Naive thymus-derived CD4-positive, alpha-beta T cell (primary cell): ENCODE measurements at regions of chr19 and their contacts with region 1.

Region 1: DNA sequence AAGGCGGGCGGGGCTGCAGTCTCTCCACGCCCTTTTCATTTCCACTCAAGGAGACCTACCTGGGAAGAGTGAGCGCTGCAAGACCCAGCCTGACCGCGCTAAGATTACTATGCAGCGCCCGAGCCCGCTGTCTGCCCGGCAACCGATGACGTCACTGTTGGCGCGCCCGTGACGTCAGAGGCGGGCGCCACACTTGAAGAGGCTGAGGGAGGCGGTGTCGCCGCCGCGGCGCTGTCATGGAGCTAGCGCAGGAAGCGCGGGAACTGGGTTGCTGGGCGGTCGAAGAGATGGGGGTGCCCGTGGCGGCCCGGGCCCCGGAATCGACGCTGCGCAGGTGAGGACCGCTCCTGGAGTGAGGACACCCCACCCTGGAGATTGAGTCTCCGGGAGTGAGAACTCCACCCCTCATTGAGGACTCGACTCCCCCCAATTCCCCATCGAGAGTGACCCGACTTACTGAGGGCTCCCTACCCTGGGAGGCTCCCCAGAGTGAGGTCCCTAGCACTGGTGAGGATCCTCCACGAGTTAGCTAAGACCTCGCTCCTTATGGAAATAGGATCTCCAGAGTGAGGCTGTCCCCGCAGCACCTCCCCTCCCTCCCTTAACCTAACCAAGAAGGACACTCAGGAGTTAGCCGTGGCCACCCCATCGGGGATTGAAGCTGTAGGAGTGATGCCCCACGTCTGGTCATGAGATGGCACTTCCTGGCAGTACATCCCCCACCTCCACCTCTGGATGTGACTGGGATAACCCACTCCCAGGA is at the start of gene HAUS5:
- DNase-seq: peak; percentile 92 to 99 (median 95)
- ATAC-seq: peak; percentile 92
- H3K4me3 ChIP-seq: peak within 1 kb of the TSS; percentile 98
- H3K4me3 Mint-ChIP-seq: peak within 1 kb of the TSS; percentile 86 to 94 (median 89)
- H3K27ac ChIP-seq: peak within 1 kb of the TSS; percentile 86
- H3K27ac Mint-ChIP-seq: peak within 1 kb of the TSS; percentile 88 to 98 (median 94)
- H3K4me1 ChIP-seq: peaks cover 24 to 28% of the 10 kb centered on the region in 2 donors
- H3K4me1 Mint-ChIP-seq: peaks cover 4 to 50% (median 43%) of the 10 kb centered on the region in 7 donors
- H3K27me3 ChIP-seq: no peaks in the 10 kb centered on the region
- H3K27me3 Mint-ChIP-seq: peaks cover 0 to 2% (median 0%) of the 10 kb centered on the region in 5 donors
- total RNA-seq, gene HAUS5: 23.6 to 40.0 (median 28.4) TPM

Region 2: GRCh38 chr19:35436477-35437405 is 176.0 kb before region 1 on chr19:
- CTCF ChIA-PET with region 1: no interaction called
- POLR2A ChIA-PET with region 1: no interaction called
- intact Hi-C with region 1: no loop called
- DNase-seq: peak in 1 of 9 donors; percentile 28
- ATAC-seq: peak; percentile 80
- H3K4me3 ChIP-seq: no peak overlapping the region
- H3K4me3 Mint-ChIP-seq: peak overlapping the region in 1 of 10 donors; percentile 40
- H3K27ac ChIP-seq: no peak overlapping the region
- H3K27ac Mint-ChIP-seq: peak overlapping the region in 1 of 9 donors; percentile 48
- H3K4me1 ChIP-seq: peaks cover 7 to 9% of the 10 kb centered on the region in 2 donors
- H3K4me1 Mint-ChIP-seq: peaks cover 6 to 21% (median 11%) of the 10 kb centered on the region in 7 donors
- H3K27me3 ChIP-seq: no peaks in the 10 kb centered on the region
- H3K27me3 Mint-ChIP-seq: peaks cover 10 to 36% (median 22%) of the 10 kb centered on the region in 5 donors

Region 3: GRCh38 chr19:35545001-35545911 is 67.5 kb before region 1 on chr19 and contains the start of gene TMEM147:
- CTCF ChIA-PET with region 1: no interaction called
- POLR2A ChIA-PET with region 1: no interaction called
- intact Hi-C with region 1: loop called (anchors 1 kb)
- DNase-seq: peak; percentile 60 to 90 (median 69)
- ATAC-seq: peak; percentile 91
- H3K4me3 ChIP-seq: peak within 1 kb of the TSS; percentile 78
- H3K4me3 Mint-ChIP-seq: peak within 1 kb of the TSS; percentile 79 to 93 (median 89)
- H3K27ac ChIP-seq: peak within 1 kb of the TSS; percentile 84
- H3K27ac Mint-ChIP-seq: peak within 1 kb of the TSS; percentile 52 to 96 (median 90)
- H3K4me1 ChIP-seq: peaks cover 13 to 16% of the 10 kb centered on the region in 2 donors
- H3K4me1 Mint-ChIP-seq: peaks cover 27 to 41% (median 38%) of the 10 kb centered on the region in 7 donors
- H3K27me3 ChIP-seq: no peaks in the 10 kb centered on the region
- H3K27me3 Mint-ChIP-seq: no peaks in the 10 kb centered on the region
- total RNA-seq, gene TMEM147: 24.7 to 54.0 (median 34.6) TPM